Mammary epithelial cell (primary cell): ENCODE measurements at regions of chr1 and their contacts with region 1.

Region 1: GRCh38 chr1:8116893-8117264 is 90.8 kb upstream of the ERRFI1 start:
- DNase-seq: no peak
- H3K4me3 ChIP-seq: no peak overlapping the region
- H3K27ac ChIP-seq: no peak overlapping the region
- H3K4me1 ChIP-seq: peaks cover 21% of the 10 kb centered on the region
- H3K27me3 ChIP-seq: no peaks in the 10 kb centered on the region
- CTCF ChIP-seq: no peak

Region 2: GRCh38 chr1:8065369-8065768 is 51.5 kb before region 1 on chr1:
- CTCF ChIA-PET with region 1: no interaction called
- dilution Hi-C with region 1: no loop called
- in situ Hi-C with region 1: no loop called
- intact Hi-C with region 1: no loop called
- DNase-seq: no peak
- H3K4me3 ChIP-seq: no peak overlapping the region
- H3K27ac ChIP-seq: no peak overlapping the region
- H3K4me1 ChIP-seq: peaks cover 19% of the 10 kb centered on the region
- H3K27me3 ChIP-seq: no peaks in the 10 kb centered on the region
- CTCF ChIP-seq: no peak

Region 3: DNA sequence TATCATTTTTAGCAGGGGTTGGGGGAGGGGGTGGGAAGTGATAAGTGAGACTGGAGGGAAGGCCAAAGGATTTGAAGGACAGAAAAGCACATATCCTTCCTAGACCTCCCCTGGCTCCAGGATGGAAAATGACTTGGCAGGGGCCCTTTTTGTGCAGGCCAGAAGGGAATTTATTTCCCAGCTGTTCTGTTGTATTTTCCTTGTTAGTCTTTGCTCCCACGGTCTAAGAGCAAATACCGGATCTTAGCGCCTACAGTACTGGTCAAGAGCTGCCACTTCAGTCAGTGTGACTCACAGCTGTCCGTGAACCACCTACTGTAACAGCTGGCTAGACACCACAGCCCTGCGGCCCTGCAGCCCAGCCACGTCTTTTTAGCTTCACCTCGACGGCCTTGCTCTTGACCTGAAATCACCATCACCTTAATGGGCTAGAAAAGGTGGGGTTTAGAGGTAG is 39.7 kb before region 1 on chr1:
- CTCF ChIA-PET with region 1: no interaction called
- dilution Hi-C with region 1: loop called (anchors 5 kb)
- in situ Hi-C with region 1: no loop called
- intact Hi-C with region 1: no loop called
- DNase-seq: peak; percentile 89
- H3K4me3 ChIP-seq: no peak overlapping the region
- H3K27ac ChIP-seq: peak overlapping the region; percentile 95
- H3K4me1 ChIP-seq: peaks cover 38% of the 10 kb centered on the region
- H3K27me3 ChIP-seq: no peaks in the 10 kb centered on the region
- CTCF ChIP-seq: no peak

Region 4: GRCh38 chr1:8169364-8170058 is 52.6 kb after region 1 on chr1:
- CTCF ChIA-PET with region 1: no interaction called
- dilution Hi-C with region 1: loop called (anchors 5 kb)
- in situ Hi-C with region 1: no loop called
- intact Hi-C with region 1: no loop called
- DNase-seq: peak; percentile 59
- H3K4me3 ChIP-seq: no peak overlapping the region
- H3K27ac ChIP-seq: peak overlapping the region; percentile 66
- H3K4me1 ChIP-seq: peaks cover 28% of the 10 kb centered on the region
- H3K27me3 ChIP-seq: no peaks in the 10 kb centered on the region
- CTCF ChIP-seq: no peak